A549 (cell line): ENCODE measurements at regions of chr4 and their contacts with region 1.

Region 1: GRCh38 chr4:15805583-15806517 is 27.7 kb downstream of the CD38 start:
- DNase-seq: peak; percentile 17 to 64
- ATAC-seq: peak; percentile 85 to 89
- H3K4me3 ChIP-seq: no peak overlapping the region
- H3K27ac ChIP-seq: 0 out of 6 replicates have a peak overlapping the region, but pooled peaks of 1 of the 2 experiments have one; percentile 14
- H3K4me1 ChIP-seq: no peaks in the 10 kb centered on the region
- CTCF ChIP-seq: peak; percentile 74
- EP300 ChIP-seq: no peak
- POLR2A ChIP-seq: no peak
- RAD21 ChIP-seq: peak; percentile 78 to 84

Region 2: DNA sequence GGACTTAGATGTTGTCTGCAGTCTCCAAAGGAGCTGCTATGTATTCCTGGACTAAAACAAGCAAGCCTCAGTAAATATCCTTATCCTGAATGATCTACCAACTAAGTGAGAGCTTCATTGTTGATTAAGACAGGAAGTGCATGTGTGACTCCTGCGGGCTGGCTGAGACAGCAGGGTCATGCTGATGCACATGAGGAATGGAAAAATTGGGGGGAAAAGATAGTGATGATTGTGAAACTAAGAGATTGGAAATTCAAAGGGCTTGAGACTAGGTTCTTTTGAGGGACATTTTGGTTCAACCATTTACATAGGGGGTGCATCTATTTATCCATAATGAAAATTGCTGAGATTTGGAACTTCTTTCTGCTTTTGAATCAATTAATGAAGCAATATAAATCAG is 439.1 kb before region 1 on chr4:
- CTCF ChIA-PET with region 1: no interaction called
- POLR2A ChIA-PET with region 1: no interaction called
- DNase-seq: no peak
- ATAC-seq: no peak
- H3K4me3 ChIP-seq: no peak overlapping the region
- H3K27ac ChIP-seq: no peak overlapping the region
- H3K4me1 ChIP-seq: no peaks in the 10 kb centered on the region
- CTCF ChIP-seq: no peak
- EP300 ChIP-seq: no peak
- POLR2A ChIP-seq: no peak
- RAD21 ChIP-seq: no peak

Region 3: DNA sequence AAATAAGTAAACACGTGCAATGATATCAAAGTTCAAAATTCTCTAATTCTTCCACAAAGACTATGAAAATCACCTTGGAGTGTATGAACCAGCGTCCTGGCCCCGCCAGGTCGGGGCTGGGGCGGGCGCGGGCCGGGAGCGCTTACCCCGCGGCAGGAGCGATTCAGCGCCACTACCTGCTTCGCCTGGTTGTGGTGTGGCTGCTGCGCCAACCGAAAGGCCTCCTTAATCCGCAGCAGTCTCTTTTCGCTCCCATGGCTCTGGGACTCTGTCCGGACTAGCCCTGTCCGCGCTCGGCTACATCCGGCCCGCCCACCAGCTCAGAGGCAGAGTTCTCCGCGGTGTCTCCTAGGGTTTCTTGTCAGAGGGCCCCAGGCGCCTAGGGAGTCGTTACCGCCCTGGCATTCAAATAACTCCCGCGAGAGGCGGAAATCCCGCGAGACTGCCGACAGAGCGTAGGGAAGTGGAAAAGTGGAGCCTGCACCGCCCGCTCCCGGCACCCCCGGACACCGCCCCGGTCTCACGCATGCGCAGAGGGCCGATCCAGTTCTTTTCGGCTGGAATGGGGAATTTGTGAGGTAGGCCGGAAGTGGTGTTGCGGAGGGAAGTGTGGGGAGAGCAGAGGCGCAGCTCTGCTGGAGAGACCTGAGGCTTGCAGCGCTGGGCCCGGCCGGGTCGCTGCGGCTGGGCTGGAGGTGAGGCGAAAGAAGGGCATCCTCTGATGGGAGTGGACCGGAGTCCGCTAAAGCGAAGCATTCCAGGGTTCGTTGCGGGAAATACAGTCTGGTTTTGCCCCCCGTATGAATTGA is 124.4 kb before region 1 on chr4 and contains the start of gene FAM200B:
- CTCF ChIA-PET with region 1: no interaction called
- POLR2A ChIA-PET with region 1: no interaction called
- DNase-seq: peak; percentile 89 to 98
- ATAC-seq: peak; percentile 93 to 95
- H3K4me3 ChIP-seq: peak within 1 kb of the TSS; percentile 69
- H3K27ac ChIP-seq: peak within 1 kb of the TSS; percentile 92 to 100
- H3K4me1 ChIP-seq: peaks cover 34% of the 10 kb centered on the region
- CTCF ChIP-seq: no peak
- EP300 ChIP-seq: no peak
- POLR2A ChIP-seq: peak; percentile 83
- RAD21 ChIP-seq: no peak
- polyA plus RNA-seq, gene FAM200B: 32.7 and 40.8 TPM in 2 replicates

Region 4: DNA sequence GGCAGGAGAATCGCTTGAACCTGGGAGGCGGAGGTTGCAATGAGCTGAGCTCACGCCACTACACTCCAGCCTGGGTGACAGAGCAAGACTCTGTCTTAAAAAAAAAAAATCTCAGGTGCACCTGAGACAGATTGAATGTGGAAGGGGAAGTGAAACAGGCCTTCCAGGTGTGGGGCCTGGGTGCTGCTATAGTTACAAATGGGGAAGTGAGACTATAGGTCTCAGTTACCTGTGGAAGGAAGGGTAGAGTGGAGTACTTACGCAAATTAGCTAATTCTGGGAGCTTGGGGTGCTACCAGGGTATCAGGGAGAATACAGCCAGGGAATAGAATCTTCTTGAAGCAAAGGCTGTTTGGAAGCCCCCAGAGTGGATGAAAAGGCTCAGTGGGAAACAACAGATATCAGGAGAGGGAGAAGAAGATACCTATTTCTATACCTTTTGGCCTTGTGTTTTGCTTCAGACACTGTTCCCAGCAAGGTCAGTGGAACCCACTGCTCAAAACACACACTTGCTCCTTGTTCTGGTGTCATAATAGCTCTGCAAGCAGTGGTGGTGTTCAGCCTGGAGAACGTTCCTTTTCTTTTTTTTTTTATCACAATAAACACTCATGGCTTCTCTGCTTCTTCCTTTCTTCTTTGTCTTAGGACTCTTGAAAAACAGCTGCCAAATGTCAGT is 20.8 kb before region 1 on chr4:
- CTCF ChIA-PET with region 1: interaction called, 11 read pairs
- POLR2A ChIA-PET with region 1: no interaction called
- DNase-seq: no peak
- ATAC-seq: no peak
- H3K4me3 ChIP-seq: no peak overlapping the region
- H3K27ac ChIP-seq: no peak overlapping the region
- H3K4me1 ChIP-seq: peaks cover under 1% of the 10 kb centered on the region; the same call in 2 of the 3 replicates
- CTCF ChIP-seq: no peak
- EP300 ChIP-seq: no peak
- POLR2A ChIP-seq: no peak
- RAD21 ChIP-seq: no peak

Region 5: DNA sequence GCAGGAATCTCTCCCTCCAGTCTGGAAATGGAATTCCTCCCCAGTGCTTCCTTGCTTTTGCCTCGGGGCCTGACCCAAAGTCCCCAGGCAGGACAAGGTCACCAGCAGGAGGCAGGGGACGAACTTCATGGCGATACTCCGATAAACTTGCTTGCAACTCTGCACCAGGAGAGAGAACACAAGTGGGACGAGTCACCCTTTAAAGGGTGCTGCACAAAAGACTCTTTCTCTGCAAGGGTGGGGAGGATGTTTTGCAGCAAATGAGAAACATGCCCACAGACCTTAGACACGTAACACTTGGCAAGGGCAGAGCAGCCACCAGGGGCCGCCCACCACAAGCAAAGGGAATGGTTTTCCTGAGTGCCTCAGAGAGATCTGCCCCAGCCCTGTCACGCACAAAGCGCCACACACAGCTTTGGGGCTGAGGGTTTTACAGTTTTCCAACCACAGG is 157.2 kb after region 1 on chr4 and contains the start of gene FGFBP2:
- CTCF ChIA-PET with region 1: interaction called, 18 read pairs
- POLR2A ChIA-PET with region 1: no interaction called
- DNase-seq: peak; percentile 28 to 48
- ATAC-seq: peak; percentile 89 to 95
- H3K4me3 ChIP-seq: no peak within 1 kb of the TSS
- H3K27ac ChIP-seq: no peak within 1 kb of the TSS
- H3K4me1 ChIP-seq: no peaks in the 10 kb centered on the region
- CTCF ChIP-seq: peak; percentile 41
- EP300 ChIP-seq: no peak
- POLR2A ChIP-seq: no peak
- RAD21 ChIP-seq: peak; percentile 50 to 63; a peak in 4 of 5 replicates
- polyA plus RNA-seq, gene FGFBP2: not detected in 2 replicates

Region 6: GRCh38 chr4:16001484-16001858 is 195.6 kb after region 1 on chr4:
- CTCF ChIA-PET with region 1: interaction called, 86 read pairs
- POLR2A ChIA-PET with region 1: no interaction called
- DNase-seq: peak; percentile 58 to 73
- ATAC-seq: peak; percentile 98 to 99
- H3K4me3 ChIP-seq: no peak overlapping the region
- H3K27ac ChIP-seq: no peak overlapping the region
- H3K4me1 ChIP-seq: no peaks in the 10 kb centered on the region
- CTCF ChIP-seq: peak; percentile 70
- EP300 ChIP-seq: no peak
- POLR2A ChIP-seq: no peak
- RAD21 ChIP-seq: peak; percentile 79 to 89

Region 7: GRCh38 chr4:16264798-16265197 is 458.9 kb after region 1 on chr4:
- CTCF ChIA-PET with region 1: interaction called, 12 read pairs
- POLR2A ChIA-PET with region 1: no interaction called
- DNase-seq: peak; percentile 15 to 30
- ATAC-seq: peak in 1 of 2 experiments; percentile 78; a peak in 3 of 6 replicates
- H3K4me3 ChIP-seq: no peak overlapping the region
- H3K27ac ChIP-seq: no peak overlapping the region
- H3K4me1 ChIP-seq: no peaks in the 10 kb centered on the region
- CTCF ChIP-seq: peak; percentile 57
- EP300 ChIP-seq: no peak
- POLR2A ChIP-seq: no peak
- RAD21 ChIP-seq: peak; percentile 72 to 77